PC-9 (cell line): ENCODE measurements at regions of chr9 and their contacts with region 1.

Region 1: DNA sequence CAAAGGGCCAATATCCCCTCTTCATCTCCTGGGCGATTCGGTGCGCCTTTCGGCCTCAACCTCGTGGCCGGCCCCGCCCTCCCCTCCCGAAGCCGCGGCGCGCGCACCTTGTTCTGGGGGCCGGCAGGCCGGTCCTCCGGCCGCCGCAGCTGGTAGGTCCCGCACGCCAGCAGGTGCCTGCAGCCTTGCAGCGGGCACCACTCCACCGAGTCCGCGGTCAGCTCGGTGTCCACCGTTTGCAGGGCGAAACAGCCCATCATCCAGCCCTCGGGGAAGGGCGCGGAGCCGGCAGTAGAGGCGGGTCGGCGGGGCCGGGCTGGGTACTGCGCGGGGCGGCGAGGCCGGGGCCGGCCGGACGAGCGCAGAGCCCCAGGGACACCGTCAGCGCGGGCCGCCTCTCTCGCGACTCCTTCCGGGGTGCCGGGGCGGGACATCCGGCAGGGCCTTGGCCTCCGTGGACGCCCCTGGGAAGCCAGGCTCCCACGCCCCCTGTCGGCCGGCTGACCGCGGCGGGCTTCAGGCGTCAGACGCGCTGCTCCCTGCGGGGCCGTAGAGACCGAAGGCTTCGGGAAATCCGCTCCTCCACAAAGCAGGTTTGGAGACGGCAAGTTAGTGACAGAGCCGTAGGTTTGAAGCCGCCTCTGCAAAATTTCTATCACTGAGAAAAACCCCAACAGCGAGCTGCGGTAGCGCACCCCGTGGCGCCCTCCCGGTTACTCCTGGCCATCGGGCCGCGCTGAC is at the start of gene DPH7:
- DNase-seq: peak; percentile 76 to 97
- H3K4me3 ChIP-seq: peak within 1 kb of the TSS; percentile 89
- H3K27ac ChIP-seq: peak within 1 kb of the TSS; percentile 55
- H3K4me1 ChIP-seq: peaks cover 17% of the 10 kb centered on the region
- H3K27me3 ChIP-seq: no peaks in the 10 kb centered on the region
- CTCF ChIP-seq: peak; percentile 85
- total RNA-seq, gene DPH7: 48.5 and 52.2 TPM in 2 replicates

Region 2: DNA sequence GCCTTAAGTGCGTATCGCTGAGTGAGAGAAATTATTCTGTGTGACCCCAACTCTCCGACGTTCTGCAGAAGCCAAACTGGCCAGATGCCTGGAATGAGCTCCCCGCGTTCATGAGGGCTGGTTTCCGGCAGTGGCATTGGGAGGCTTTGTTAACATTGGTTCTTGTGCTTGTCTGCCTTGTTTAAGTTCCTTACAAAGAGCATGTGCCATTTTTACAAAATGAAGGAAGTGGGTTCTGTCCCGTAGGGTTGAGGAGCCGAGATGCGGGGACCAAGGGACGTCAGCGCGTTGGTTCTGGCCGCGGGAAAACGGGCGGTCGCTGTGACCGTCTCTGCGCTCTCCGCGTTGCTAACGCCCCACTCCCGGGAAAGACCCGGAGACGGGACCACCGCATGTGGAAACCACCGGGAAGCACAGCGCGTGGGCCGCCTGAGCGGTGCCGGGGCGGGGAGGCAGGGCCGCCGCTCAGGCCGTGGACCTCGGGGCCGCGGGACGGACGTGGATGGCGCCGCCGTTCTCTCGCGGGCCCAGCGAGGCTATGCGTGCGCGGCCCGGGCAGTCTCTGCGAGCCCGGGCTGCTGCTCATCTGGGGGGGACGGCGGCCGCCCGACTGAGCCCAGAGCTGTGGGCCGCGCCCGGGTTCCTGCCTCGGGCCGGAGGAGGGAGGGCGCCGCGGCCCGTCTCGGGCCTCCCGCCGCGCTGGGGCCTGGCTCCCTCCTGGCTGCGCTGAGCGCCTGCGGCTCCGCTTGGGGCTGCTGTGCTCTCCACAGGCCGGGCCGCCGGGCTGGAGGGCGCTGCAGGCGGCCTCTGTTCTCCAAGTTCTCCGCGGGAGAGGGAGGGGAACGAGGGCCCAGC is 757.5 kb before region 1 on chr9:
- CTCF ChIA-PET with region 1: no interaction called
- POLR2A ChIA-PET with region 1: no interaction called
- intact Hi-C with region 1: no loop called
- DNase-seq: no peak
- H3K4me3 ChIP-seq: no peak overlapping the region
- H3K27ac ChIP-seq: no peak overlapping the region
- H3K4me1 ChIP-seq: no peaks in the 10 kb centered on the region
- H3K27me3 ChIP-seq: no peaks in the 10 kb centered on the region
- CTCF ChIP-seq: no peak

Region 3: DNA sequence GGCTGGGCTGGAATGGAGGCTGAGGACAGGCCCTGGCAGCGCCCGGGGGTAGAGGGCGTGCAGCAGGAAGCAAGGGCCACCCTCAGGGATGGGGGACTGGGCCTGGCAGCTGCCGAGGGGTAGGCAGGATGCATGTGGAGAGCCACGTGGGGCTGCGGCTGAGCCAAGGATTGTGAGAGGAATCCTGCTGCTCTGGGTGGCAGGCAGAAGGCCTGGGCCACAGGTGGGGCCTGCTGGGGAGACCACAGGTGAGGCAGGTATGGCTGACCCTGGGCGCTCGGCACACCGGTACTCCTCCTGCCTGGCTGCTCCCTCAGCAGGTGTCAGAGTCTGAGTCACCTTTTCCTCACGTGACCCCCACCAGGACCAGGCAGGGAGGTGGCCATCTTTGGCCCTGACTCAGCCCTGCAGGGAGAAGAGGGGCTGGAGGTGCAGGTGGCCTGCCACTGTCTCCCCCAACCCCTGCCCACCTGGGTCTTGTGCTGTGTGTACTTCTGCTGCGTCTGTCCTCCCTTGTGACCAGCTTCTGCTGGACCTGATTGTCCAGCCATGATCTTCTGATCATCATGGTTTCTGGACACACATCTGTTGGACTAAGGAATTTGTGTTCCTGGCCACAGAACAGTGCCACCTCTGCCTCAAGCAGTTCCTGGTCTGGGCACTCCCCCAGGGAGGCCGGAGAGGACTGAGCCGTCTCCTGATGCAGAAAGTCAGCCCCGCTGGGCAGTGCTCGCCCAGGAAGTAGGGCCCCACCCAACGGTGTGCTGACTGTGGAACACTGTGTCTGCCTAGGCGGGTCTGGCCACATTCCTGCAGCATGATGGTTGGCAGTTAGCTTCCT is 33.2 kb after region 1 on chr9:
- CTCF ChIA-PET with region 1: no interaction called
- POLR2A ChIA-PET with region 1: no interaction called
- intact Hi-C with region 1: loop called (anchors 2 kb)
- DNase-seq: peak; percentile 99
- H3K4me3 ChIP-seq: peak overlapping the region; percentile 44; the same call in 1 of the 2 replicates
- H3K27ac ChIP-seq: peak overlapping the region; percentile 97
- H3K4me1 ChIP-seq: peaks cover 76% of the 10 kb centered on the region
- H3K27me3 ChIP-seq: no peaks in the 10 kb centered on the region
- CTCF ChIP-seq: no peak

Region 4: GRCh38 chr9:137960496-137960895 is 381.8 kb after region 1 on chr9:
- CTCF ChIA-PET with region 1: no interaction called
- POLR2A ChIA-PET with region 1: no interaction called
- intact Hi-C with region 1: no loop called
- DNase-seq: no peak
- H3K4me3 ChIP-seq: no peak overlapping the region
- H3K27ac ChIP-seq: no peak overlapping the region
- H3K4me1 ChIP-seq: no peaks in the 10 kb centered on the region
- H3K27me3 ChIP-seq: peaks cover 80% of the 10 kb centered on the region
- CTCF ChIP-seq: no peak

Region 5: GRCh38 chr9:138097501-138097991 is 518.9 kb after region 1 on chr9:
- CTCF ChIA-PET with region 1: no interaction called
- POLR2A ChIA-PET with region 1: interaction called, 12 read pairs
- intact Hi-C with region 1: no loop called
- DNase-seq: no peak
- H3K4me3 ChIP-seq: no peak overlapping the region
- H3K27ac ChIP-seq: no peak overlapping the region
- H3K4me1 ChIP-seq: no peaks in the 10 kb centered on the region
- H3K27me3 ChIP-seq: peaks cover 30% of the 10 kb centered on the region
- CTCF ChIP-seq: no peak